Tibial artery (tissue), 4 donors: ENCODE measurements at regions of chr20 and their contacts with region 1.

Region 1: DNA sequence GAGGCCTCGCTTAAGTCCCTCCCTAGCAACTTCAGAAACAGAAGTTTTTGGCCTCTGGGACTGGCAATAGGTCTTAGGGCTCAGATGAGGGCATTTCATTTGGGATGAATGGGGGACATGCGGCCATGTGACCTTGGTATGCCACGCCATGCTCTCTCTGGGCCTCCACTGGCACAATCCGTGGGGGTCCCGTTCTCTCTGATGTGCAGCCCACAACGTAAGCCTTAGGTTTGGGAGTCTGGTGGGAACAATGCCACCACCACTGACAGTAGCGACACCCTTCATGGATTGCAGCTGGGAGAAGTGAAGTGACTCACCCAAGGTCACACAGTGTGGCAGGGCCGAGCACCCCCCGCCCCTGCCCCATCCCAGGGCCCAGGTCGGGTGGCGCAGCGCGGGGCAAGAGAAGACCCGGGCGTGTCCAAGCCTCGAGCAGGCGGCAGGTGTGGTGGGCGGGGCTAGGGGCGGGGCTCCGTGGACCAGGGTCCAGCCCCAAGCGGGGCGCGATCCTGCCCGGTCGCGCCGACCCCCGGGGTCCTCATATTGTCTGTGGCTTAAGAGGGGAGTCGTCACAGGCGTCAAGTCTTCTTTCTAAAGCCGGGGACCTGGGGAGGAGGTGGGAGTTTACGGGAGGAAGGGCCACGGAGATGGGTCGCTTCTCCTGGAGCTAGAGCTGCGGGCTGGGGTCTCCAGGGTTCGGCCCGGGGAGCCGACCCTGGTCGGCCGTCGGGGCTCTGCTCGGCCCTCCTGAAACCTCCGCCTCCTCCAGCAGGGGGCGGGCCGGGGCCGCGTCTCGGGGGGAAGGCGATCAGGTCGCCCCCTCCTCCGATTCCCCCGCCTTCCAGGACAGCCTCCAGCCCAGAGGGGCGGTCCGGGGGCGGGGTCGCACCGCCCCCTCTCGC is 698 bp upstream of the CEBPB start:
- DNase-seq: peak; percentile 90 to 96
- H3K4me3 ChIP-seq: peak overlapping the region; percentile 59 to 88
- H3K27ac ChIP-seq: peak overlapping the region; percentile 96 to 98
- H3K4me1 ChIP-seq: peaks cover 0 to 33% (median 25%) of the 10 kb centered on the region in 4 donors
- H3K27me3 ChIP-seq: no peaks in the 10 kb centered on the region
- CTCF ChIP-seq: peak; percentile 88

Region 2: GRCh38 chr20:50070991-50071888 is 118.7 kb before region 1 on chr20:
- intact Hi-C with region 1: no loop called
- DNase-seq: peak; percentile 86 to 91
- H3K4me3 ChIP-seq: peak overlapping the region; percentile 28 to 32
- H3K27ac ChIP-seq: no peak overlapping the region
- H3K4me1 ChIP-seq: peaks cover 0 to 15% (median 5%) of the 10 kb centered on the region in 4 donors
- H3K27me3 ChIP-seq: peaks cover 0 to 19% of the 10 kb centered on the region in 2 donors
- CTCF ChIP-seq: peak; percentile 100

Region 3: GRCh38 chr20:50169329-50169831 is 20.6 kb before region 1 on chr20:
- intact Hi-C with region 1: no loop called
- DNase-seq: peak; percentile 88 to 89
- H3K4me3 ChIP-seq: no peak overlapping the region
- H3K27ac ChIP-seq: no peak overlapping the region
- H3K4me1 ChIP-seq: peaks cover 0 to 47% (median 20%) of the 10 kb centered on the region in 4 donors
- H3K27me3 ChIP-seq: no peaks in the 10 kb centered on the region
- CTCF ChIP-seq: peak; percentile 92 to 95

Region 4: DNA sequence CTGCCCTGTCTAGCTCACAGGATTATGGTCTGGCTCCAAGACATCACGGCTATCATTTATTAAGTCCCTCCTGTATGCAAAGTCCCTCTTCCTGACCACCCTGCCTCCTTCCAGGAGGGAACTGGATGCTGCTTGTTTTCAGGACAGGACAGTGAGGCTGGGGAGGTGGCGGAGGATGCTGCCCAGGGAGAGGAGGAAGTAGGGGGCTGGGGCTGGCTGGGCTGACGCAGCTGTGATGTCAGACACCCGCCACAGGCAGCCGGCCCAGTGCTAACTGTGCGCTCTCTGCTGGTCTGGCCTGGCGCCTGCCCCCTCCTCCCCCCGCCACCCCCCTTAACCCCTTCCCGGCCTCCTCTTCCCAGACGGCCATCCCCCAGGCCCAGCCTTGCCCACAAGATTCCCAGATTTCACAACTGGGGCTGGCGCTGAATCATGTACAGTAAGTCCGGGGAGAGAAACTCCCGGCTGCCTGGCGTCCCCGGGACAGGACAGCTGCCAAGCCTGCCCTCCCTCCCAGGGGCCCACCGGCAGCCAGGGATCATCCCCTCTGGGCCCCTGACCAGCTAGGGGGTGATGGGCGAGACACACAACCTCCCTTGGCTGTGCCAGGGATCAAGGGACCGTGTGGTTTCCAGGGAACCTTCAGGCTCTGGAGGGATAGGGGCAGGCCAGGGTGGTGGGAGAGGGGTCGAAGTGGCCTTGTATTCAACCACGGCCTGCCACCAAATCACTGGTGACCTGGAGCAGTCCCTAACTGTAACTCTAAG is 118.8 kb after region 1 on chr20:
- intact Hi-C with region 1: loop called (anchors 5 kb)
- DNase-seq: peak; percentile 96 to 98
- H3K4me3 ChIP-seq: no peak overlapping the region
- H3K27ac ChIP-seq: peak overlapping the region; percentile 79 to 92
- H3K4me1 ChIP-seq: peaks cover 0 to 91% (median 80%) of the 10 kb centered on the region in 4 donors
- H3K27me3 ChIP-seq: no peaks in the 10 kb centered on the region
- CTCF ChIP-seq: no peak

Region 5: GRCh38 chr20:50395258-50395729 is 205.4 kb after region 1 on chr20:
- intact Hi-C with region 1: loop called (anchors 5 kb)
- DNase-seq: peak; percentile 95 to 99
- H3K4me3 ChIP-seq: no peak overlapping the region
- H3K27ac ChIP-seq: peak overlapping the region; percentile 87 to 96
- H3K4me1 ChIP-seq: peaks cover 0 to 77% (median 60%) of the 10 kb centered on the region in 4 donors
- H3K27me3 ChIP-seq: no peaks in the 10 kb centered on the region
- CTCF ChIP-seq: peak in 1 of 2 experiments; percentile 21

Region 6: DNA sequence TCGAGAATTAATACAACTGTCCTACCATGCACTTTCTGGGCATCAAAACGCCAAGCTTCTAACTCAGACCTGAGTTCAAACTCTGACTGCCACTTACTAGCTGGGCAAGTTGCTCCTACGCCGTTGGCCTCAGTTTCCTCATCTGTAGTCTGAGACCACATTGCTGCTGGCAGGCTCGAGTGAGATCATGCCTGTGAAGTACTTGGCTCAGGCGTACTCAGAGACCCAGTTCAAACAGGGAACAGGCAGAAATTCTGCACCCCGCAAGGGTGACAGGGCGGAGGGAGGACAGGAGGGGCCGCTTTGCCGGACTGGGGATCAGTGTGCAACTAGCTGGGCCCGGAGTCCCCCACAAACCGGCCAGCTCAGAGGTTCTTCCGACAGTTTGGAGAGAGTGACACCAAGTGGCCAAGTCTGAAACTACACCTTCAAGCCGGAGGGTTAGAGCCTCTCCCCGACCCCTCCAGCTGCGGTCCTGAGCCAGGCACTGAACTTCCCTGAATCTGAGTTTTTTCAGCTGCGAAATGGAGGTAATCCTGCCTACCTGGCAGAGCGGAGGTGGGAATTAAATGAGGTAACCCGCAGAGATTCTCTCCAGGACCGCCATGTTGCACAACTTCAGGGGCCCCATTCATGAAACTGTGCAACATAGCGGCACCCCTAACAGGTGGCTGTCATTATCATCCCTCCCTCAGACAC is 274.2 kb after region 1 on chr20:
- intact Hi-C with region 1: loop called (anchors 2 kb)
- DNase-seq: peak in 1 of 2 donors; percentile 81
- H3K4me3 ChIP-seq: no peak overlapping the region
- H3K27ac ChIP-seq: no peak overlapping the region
- H3K4me1 ChIP-seq: peaks cover 0 to 22% (median 12%) of the 10 kb centered on the region in 4 donors
- H3K27me3 ChIP-seq: no peaks in the 10 kb centered on the region
- CTCF ChIP-seq: peak; percentile 68 to 76

Region 7: DNA sequence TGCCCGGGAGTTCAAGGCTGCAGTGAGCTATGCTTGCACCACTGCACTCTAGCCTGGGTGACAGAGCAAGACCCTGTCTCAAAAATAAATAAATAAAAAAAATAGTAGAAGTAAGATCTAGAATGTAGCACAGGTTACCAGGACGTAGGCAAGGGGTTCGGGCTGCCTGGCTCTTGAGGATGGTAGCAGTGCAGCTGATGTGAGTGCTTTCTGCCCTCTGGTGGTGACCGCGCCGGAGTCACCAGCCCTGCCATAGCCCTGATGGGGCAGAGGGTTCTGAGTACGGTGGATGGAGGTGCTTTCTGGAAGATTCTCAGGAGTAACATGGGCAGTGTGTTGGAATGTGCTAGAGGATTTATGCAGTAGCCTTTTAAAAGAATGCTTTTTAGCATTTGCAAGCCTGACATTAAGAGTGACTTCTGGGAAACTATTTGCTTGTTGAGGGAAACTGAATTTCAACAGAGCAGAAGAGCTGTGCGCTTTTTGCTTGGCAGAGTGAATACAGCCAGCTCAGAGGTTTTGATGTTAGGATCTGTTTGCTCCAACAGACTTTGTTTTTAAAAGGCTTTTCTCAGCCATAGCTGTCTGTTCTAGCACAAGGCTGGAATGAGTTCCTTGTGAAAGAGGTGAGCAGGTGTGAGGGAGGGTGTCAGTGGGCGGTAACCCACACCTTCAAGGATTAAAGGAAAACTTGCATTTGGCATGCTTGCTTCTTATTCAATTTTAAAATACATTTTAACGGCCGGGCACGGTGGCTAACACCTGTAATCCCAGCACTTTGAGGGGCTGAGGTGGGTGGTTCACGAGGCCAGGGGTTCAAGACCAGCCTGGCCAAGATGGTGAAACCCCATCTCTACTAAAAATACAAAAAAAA is 386.2 kb after region 1 on chr20:
- intact Hi-C with region 1: loop called (anchors 2 kb)
- DNase-seq: peak; percentile 64 to 75
- H3K4me3 ChIP-seq: no peak overlapping the region
- H3K27ac ChIP-seq: no peak overlapping the region
- H3K4me1 ChIP-seq: peaks cover 0 to 39% (median 15%) of the 10 kb centered on the region in 4 donors
- H3K27me3 ChIP-seq: no peaks in the 10 kb centered on the region
- CTCF ChIP-seq: peak; percentile 63 to 69